Lower leg skin (tissue), 4 donors: ENCODE measurements at regions of chr10 and their contacts with region 1.

Region 1: GRCh38 chr10:43105102-43105785 is 28.4 kb downstream of the RET start:
- DNase-seq: peak; percentile 47 to 93
- H3K4me3 ChIP-seq: peak overlapping the region; percentile 37
- CTCF ChIP-seq: peak in 1 of 3 donors; percentile 98
- POLR2A ChIP-seq: no peak

Region 2: DNA sequence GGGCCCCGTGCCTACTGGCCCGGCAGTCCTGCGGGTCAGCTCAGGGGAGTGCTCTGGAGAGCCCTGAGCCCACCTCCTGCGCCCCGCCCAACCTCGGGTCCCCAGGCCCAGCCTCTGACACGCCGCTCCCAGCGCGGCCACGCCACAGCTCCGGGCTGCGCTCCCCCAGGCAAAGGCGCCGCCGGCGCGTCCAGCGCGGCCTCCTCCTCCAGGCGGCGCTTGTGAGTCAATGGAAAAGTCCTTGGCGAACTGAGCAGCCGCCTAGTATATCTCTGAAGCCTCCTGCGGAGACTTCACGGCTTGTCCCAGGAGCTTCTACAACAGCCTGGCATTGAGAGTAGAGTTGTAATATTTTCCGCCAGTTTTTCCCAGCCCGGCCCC is 352.1 kb before region 1 on chr10:
- intact Hi-C with region 1: loop called (anchors 10 kb)
- DNase-seq: peak; percentile 63 to 93
- H3K4me3 ChIP-seq: peak overlapping the region; percentile 40
- CTCF ChIP-seq: no peak
- POLR2A ChIP-seq: no peak

Region 3: DNA sequence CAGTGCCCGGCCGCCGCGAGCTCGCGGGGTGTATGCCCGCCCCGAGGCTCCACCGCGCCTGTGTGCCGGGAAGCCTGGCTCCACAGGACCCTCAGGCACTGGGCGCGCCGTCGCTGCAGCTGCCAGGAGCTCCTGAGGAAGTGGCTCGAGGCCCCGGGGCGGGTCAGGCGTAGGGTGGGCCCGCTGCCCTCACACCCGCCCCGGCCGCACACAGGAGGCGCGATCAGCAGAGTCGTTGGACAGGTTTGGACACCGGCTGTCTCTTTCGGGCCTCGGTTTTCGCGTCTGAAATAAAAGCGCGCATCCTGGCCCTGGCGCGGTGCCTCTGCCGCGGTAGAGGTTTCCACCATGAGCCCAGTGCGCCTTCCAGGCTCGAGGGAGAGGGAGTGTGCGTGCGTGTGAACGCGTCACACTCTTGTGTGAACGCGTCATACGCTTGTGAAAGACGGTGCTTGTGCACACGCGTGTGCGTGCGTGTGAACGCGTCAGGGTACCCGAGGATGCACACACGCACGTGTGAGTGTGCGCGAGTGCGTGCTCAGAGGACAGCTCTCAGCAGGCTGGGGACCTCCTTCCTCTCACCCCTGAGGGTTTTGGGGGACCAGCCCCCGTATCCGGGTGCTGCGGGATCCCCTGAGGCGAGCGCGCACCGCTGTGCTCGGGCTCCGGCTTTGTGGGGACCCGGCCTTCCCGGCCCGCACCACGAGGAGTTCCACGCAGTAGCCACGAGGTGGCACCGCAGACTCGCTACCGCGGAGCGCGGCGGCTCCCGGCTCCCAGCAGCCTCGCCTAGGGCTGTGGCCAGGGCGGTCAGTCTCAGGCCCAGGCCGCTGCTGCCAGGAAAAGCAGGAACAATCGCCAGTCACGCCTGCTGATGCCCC is 238.9 kb before region 1 on chr10:
- intact Hi-C with region 1: loop called (anchors 5 kb)
- DNase-seq: peak; percentile 32 to 94
- H3K4me3 ChIP-seq: no peak overlapping the region
- CTCF ChIP-seq: no peak
- POLR2A ChIP-seq: no peak